Aorta (tissue), 5 donors: ENCODE measurements at regions of chr21 and their contacts with region 1.

Region 1: GRCh38 chr21:34582506-34583150 is 32.3 kb downstream of the RCAN1 start:
- DNase-seq: no peak
- ATAC-seq: peak; percentile 67
- H3K4me3 ChIP-seq: no peak overlapping the region
- H3K27ac ChIP-seq: peak overlapping the region in 1 of 2 donors; percentile 52
- H3K4me1 ChIP-seq: peaks cover 0 to 2% of the 10 kb centered on the region in 2 donors
- H3K27me3 ChIP-seq: no peaks in the 10 kb centered on the region

Region 2: DNA sequence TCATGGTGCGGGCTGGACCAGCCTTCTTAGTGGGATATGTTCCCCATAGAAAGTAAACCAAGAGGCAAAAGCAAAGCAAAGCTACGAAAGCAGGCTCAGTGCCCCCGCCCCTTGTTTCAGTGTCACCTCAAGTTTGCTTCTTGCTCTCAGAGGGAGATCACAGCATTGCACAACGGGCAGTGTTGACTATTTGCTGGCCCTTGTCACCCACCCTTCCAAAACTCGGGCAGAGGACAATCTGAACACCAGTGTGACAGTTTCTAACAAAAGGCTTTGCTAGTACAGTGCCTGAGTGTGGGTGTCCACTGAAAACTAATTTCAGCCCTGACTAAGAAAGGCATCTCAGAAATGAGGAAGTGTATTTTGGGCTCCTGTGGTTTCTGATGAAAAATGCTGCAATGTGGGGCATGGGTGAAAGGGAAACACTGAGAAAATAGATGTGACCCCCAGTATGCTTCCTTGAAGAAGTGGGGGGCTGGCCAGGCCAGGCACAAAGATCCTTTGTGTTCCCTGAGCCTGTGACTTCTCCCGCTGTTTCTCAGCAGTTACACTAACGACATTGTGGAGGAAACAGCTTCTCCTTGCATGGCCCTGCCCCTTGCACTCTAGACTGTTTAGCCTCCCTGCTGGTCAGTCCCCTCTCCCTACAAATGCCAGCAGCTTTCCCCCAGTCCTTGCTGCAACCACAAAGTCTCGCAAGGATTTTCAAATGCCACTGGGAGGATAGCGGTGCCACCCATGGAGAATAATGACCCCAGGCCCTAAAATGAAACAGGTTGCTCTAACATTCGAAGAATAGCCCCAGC is 37.3 kb before region 1 on chr21:
- intact Hi-C with region 1: loop called in 1 of 2 experiments (anchors 5 kb)
- DNase-seq: no peak
- ATAC-seq: peak; percentile 69
- H3K4me3 ChIP-seq: no peak overlapping the region
- H3K27ac ChIP-seq: peak overlapping the region; percentile 8 to 96
- H3K4me1 ChIP-seq: no peaks in the 10 kb centered on the region
- H3K27me3 ChIP-seq: no peaks in the 10 kb centered on the region